Activated T-helper 1 cell treated with anti-CD3 and anti-CD28 coated beads, Interleukin-12 subunit alpha, Interleukin-12 subunit beta, Interleukin-2, Interleukin-4 antibody, amounts not matched to agents 30 ng/mL and 10 ng/mL and 1 ng/mL, durations not matched to agents 14 hours and 24 hours and 36 hours (primary cell): ENCODE measurements at regions of chrX and their contacts with region 1.

Region 1: DNA sequence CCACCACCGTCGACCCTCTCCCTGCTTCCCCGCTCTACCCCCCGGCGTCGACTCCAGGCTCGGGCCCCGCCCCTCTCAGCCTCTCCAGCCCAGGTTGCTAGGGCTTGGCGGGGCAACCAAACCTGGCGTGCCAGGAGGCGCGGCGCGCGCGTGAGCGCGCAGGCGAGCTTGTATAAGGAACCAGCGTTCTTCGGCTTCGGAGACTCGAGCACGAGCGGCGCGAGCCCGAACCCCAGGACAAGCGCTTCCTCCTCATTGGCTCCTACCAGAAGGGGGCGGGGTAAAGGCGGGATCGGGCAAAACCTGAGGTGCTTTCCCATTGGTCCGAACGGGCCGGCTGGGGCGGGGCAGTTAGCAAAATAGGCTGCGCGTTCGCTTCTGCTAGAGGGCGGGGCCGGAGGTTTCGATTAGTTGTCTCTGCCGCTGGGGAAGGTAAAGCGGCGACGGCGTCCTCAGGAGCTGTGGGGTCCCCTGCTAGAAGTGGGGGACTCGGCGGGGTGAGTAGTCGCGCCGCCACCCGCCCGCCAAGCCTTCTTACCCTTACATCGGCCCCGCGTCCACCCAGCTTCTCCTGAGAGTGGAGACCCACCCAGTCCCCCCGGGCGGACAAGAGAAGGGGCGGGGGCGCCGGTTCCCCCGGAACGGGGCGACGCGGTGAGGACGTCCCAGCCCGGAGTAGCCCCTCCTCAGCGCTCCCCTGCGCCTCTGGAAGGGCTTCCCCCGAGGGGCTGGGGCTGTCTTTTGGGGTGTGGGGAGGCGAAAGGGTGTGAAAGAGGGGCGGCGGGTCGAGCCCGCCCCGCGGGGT is at the start of gene CDKL5:
- DNase-seq: peak; percentile 91
- H3K4me3 Mint-ChIP-seq: peak within 1 kb of the TSS; percentile 86
- H3K27ac Mint-ChIP-seq: no peak within 1 kb of the TSS
- H3K4me1 Mint-ChIP-seq: peaks cover 13% of the 10 kb centered on the region
- H3K27me3 Mint-ChIP-seq: peaks cover 9% of the 10 kb centered on the region
- total RNA-seq, gene CDKL5: 0.69 and 0.73 TPM in 2 replicates

Region 2: GRCh38 chrX:17237146-17237545 is 1188.3 kb before region 1 on chrX:
- intact Hi-C with region 1: no loop called
- DNase-seq: no peak
- H3K4me3 Mint-ChIP-seq: no peak overlapping the region
- H3K27ac Mint-ChIP-seq: no peak overlapping the region
- H3K4me1 Mint-ChIP-seq: no peaks in the 10 kb centered on the region
- H3K27me3 Mint-ChIP-seq: no peaks in the 10 kb centered on the region

Region 3: DNA sequence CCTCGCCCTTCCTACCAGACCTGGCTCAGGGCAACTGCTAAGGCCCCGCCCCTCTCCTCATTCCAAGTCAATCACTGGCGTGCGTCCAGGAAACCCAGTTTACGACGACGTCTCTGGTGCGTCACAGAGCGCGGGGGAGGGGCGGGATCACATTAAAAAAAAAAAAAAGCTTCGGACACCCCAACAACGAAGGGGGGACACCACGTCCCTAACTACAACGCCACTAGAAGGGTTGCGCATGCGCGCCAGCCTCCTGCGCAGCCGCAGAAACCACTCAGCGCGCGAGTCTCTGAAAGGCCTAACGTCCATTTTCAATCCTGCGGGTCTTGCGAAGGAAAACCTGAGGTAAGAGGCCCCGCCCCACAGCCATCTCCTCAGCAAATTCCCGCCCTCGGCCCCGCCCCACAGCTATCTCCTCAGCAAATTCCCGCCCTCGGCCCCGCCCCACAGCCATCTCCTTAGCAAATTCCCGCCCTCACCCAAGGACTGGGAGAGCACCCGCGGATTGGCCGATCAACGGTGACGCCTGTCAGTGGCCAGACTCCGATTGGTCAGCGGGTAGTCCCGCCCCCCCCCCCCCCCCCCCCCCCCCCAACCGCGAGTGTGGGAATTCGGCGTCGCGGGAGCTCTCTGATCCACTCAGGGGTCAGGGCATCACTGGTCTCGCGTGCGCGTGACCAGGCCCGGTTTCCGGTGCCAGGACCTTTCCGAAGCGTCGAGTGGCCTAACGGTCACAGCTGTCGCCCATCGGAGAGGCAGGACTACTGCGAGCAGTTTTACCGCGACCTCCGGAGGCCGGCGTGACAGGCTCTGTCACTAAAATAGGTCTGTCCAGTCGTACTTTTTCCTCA is 688.3 kb before region 1 on chrX and contains the start of gene SCML1:
- intact Hi-C with region 1: loop called (anchors 1 kb)
- DNase-seq: peak; percentile 75
- H3K4me3 Mint-ChIP-seq: peak within 1 kb of the TSS; percentile 80
- H3K27ac Mint-ChIP-seq: peak within 1 kb of the TSS; percentile 79
- H3K4me1 Mint-ChIP-seq: peaks cover 20% of the 10 kb centered on the region
- H3K27me3 Mint-ChIP-seq: peaks cover 34% of the 10 kb centered on the region
- total RNA-seq, gene SCML1: 1.1 and 1.4 TPM in 2 replicates

Region 4: GRCh38 chrX:18390941-18391538 is 34.4 kb before region 1 on chrX:
- intact Hi-C with region 1: loop called (anchors 1 kb)
- DNase-seq: peak; percentile 14
- H3K4me3 Mint-ChIP-seq: no peak overlapping the region
- H3K27ac Mint-ChIP-seq: no peak overlapping the region
- H3K4me1 Mint-ChIP-seq: peaks cover 6% of the 10 kb centered on the region
- H3K27me3 Mint-ChIP-seq: no peaks in the 10 kb centered on the region

Region 5: GRCh38 chrX:18886344-18887161 is 461.2 kb after region 1 on chrX:
- intact Hi-C with region 1: loop called (anchors 2 kb)
- DNase-seq: peak; percentile 12
- H3K4me3 Mint-ChIP-seq: peak overlapping the region; percentile 85
- H3K27ac Mint-ChIP-seq: peak overlapping the region; percentile 85
- H3K4me1 Mint-ChIP-seq: peaks cover 19% of the 10 kb centered on the region
- H3K27me3 Mint-ChIP-seq: peaks cover 2% of the 10 kb centered on the region

Region 6: DNA sequence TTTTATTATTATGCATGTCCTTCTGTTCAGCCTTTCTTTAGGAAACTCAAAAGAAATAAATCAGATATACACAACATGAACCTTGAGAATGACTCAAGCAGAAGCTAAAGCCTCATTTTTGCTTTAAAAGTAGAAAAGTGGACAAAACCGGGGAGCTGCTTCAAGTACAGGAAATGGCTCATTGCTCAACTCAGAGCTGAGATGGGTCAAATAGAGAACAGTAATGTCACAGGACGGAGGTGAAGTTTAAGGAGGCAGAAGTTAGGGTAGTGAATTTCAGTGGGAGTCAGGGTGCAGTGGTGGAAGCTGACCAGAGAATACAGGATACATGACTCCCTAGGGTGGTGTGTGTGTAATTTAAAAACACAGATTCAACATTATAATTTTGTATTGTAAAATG is 536.3 kb after region 1 on chrX:
- intact Hi-C with region 1: no loop called
- DNase-seq: no peak
- H3K4me3 Mint-ChIP-seq: no peak overlapping the region
- H3K27ac Mint-ChIP-seq: no peak overlapping the region
- H3K4me1 Mint-ChIP-seq: peaks cover 9% of the 10 kb centered on the region
- H3K27me3 Mint-ChIP-seq: no peaks in the 10 kb centered on the region

Region 7: DNA sequence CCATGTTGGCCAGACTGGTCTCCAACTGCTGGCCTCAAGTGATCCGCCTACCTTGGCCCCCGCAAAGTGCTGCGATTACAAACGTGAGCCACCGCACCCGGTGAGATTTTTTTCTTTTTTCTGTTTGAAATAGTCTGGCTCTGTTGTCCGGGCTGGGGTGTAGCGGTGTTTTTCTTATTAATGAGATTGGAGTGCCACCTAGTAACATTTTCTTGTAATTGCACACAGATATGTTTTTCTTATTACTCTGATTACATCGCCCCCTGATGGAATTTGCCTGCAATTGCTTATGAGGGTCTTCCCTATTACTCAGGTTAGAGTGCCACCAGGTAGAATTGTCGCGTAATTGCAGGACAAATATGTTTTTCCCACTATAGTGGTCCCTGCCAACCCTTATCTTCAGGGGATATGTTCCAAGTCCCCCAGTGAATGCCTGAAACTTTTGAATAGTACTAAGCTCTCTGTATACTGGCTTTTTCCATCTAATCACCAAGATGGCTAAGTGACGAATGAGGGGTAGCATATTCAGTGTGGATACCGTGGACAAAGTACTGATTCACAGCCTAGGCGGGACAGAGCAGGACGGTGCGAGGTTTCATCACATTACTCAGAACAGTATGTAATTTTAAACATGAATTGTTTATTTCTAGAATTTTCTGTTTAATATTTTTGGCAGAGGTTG is 909.7 kb after region 1 on chrX:
- intact Hi-C with region 1: loop called (anchors 2 kb)
- DNase-seq: peak; percentile 0
- H3K4me3 Mint-ChIP-seq: no peak overlapping the region
- H3K27ac Mint-ChIP-seq: no peak overlapping the region
- H3K4me1 Mint-ChIP-seq: no peaks in the 10 kb centered on the region
- H3K27me3 Mint-ChIP-seq: peaks cover 2% of the 10 kb centered on the region

Region 8: DNA sequence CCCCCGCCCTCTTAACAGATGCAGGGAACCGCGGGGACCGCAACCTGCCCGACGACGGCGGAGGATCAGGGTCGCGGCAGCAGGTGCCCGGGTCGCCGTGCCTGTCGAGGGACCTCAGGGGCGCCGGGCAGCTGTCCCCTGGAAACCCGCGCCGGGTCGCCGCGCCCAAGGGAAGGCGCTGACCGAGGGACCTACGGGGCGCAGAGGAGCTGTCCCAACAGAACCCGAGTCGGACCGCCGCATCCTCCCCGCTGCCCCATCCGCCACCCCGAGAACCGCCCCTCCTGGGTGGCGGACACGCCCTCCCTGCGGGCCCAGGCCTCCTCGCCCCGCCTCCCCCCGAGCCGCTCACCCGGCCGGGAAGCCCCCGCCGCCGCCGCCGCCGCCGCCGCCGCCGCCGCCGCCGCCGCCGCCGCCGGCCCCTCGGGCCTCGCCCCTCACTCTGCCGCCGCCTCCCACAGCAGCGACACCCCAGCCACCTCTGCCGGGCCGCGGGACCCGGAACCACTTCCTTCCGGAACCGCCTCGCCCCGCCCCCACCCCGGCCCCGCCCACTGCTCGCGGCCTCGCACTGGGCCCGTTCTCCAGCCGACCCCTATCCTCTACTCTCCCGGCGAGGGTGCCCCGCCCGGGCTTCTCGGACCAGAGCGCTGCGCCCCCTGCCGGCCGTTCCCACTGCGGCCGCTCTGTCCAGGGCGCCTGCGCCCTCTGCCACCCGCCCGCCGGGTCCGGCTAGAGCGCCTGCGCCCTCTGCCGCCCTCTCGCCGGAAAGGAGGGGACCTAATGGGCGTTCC is 1565.4 kb after region 1 on chrX and contains the start of gene BCLAF3:
- intact Hi-C with region 1: loop called (anchors 10 kb)
- DNase-seq: peak; percentile 81
- H3K4me3 Mint-ChIP-seq: peak within 1 kb of the TSS; percentile 94
- H3K27ac Mint-ChIP-seq: peak within 1 kb of the TSS; percentile 89
- H3K4me1 Mint-ChIP-seq: peaks cover 17% of the 10 kb centered on the region
- H3K27me3 Mint-ChIP-seq: peaks cover 3% of the 10 kb centered on the region
- total RNA-seq, gene BCLAF3: 5.4 and 6.2 TPM in 2 replicates